ENCODE measurements at regions of chr4 and their contacts with region 1.

Region 1: GRCh38 chr4:17939054-17939453 is 82.5 kb downstream of the LCORL start:
- DNase-seq: no peak
- ATAC-seq: no peak
- H3K4me3 ChIP-seq: no peak overlapping the region
- H3K27ac ChIP-seq: no peak overlapping the region
- H3K4me1 ChIP-seq: no peaks in the 10 kb centered on the region
- H3K27me3 ChIP-seq: no peaks in the 10 kb centered on the region
- CTCF ChIP-seq: no peak
- POLR2A ChIP-seq: no peak

Region 2: GRCh38 chr4:18214411-18215055 is 275.5 kb after region 1 on chr4:
- intact Hi-C with region 1: loop called in 1 of 10 experiments (anchors 5 kb)
- DNase-seq: no peak
- ATAC-seq: no peak
- H3K4me3 ChIP-seq: no peak overlapping the region
- H3K27ac ChIP-seq: no peak overlapping the region
- H3K4me1 ChIP-seq: no peaks in the 10 kb centered on the region
- H3K27me3 ChIP-seq: peaks cover 0 to 5% (median 0%) of the 10 kb centered on the region in 9 donors
- CTCF ChIP-seq: no peak
- POLR2A ChIP-seq: no peak

Measured in heart left ventricle (tissue), 16 donors.